Heart right ventricle (tissue), 16 donors: ENCODE measurements at regions of chr11 and their contacts with region 1.

Region 1: GRCh38 chr11:63738720-63739360 is 29.7 kb downstream of the ZFTA start:
- DNase-seq: peak; percentile 41 to 68
- ATAC-seq: peak in 5 of 8 donors; percentile 47 to 83 (median 67)
- H3K4me3 ChIP-seq: no peak overlapping the region
- H3K27ac ChIP-seq: peak overlapping the region in 3 of 10 donors; percentile 1 to 25 (median 7)
- H3K4me1 ChIP-seq: peaks cover 0 to 15% (median 5%) of the 10 kb centered on the region in 9 donors
- H3K27me3 ChIP-seq: no peaks in the 10 kb centered on the region
- CTCF ChIP-seq: peak; percentile 89 to 99 (median 96)

Region 2: GRCh38 chr11:63478896-63479295 is 259.9 kb before region 1 on chr11:
- intact Hi-C with region 1: loop called in 9 of 10 experiments (anchors 2 to 10 kb)
- DNase-seq: peak in 1 of 2 donors; percentile 55
- ATAC-seq: peak; percentile 61 to 84 (median 80)
- H3K4me3 ChIP-seq: no peak overlapping the region
- H3K27ac ChIP-seq: no peak overlapping the region
- H3K4me1 ChIP-seq: peaks cover 0 to 2% (median 0%) of the 10 kb centered on the region in 9 donors
- H3K27me3 ChIP-seq: no peaks in the 10 kb centered on the region
- CTCF ChIP-seq: peak; percentile 77 to 93 (median 91)

Region 3: DNA sequence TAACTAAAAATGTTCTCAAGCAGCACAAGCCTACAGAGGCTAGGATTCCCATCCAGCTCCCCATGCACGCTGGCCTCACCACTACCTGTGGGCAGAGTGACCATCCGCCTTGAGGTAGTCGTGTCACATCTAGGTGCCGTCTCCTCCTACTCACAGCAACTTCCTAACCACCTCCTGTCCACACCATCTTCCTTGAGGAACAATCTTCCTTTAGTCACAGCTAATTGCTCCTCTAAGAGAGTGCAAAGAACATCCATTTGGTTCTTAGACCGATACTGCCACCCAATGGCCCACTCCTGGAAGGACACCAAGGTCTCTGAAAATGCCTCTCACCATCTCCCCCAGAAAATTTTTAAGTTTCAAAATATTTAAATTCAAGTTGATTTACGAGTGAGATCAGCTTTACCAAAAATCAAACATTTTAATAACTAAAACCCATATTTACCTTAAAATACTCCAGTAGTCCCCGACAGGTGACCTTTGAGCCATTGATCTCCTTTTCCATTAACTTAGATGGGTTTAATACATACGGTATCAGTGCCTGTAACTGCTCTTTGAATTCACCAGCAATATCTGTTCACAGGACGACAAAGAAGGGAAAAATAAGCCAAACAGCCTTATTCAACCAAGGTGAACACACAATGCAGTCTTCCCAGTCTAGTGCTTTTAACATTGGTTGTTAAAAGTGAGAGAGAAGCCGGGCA is 102.9 kb before region 1 on chr11:
- intact Hi-C with region 1: loop called in 8 of 10 experiments (anchors 2 to 10 kb)
- DNase-seq: peak; percentile 22 to 49
- ATAC-seq: peak; percentile 62 to 80 (median 74)
- H3K4me3 ChIP-seq: no peak overlapping the region
- H3K27ac ChIP-seq: no peak overlapping the region
- H3K4me1 ChIP-seq: peaks cover 0 to 8% (median 0%) of the 10 kb centered on the region in 9 donors
- H3K27me3 ChIP-seq: no peaks in the 10 kb centered on the region
- CTCF ChIP-seq: peak; percentile 64 to 92 (median 84)

Region 4: GRCh38 chr11:63652671-63653070 is 86.2 kb before region 1 on chr11:
- intact Hi-C with region 1: loop called in 2 of 10 experiments (anchors 10 kb)
- DNase-seq: no peak
- ATAC-seq: no peak
- H3K4me3 ChIP-seq: no peak overlapping the region
- H3K27ac ChIP-seq: no peak overlapping the region
- H3K4me1 ChIP-seq: peaks cover 0 to 5% (median 0%) of the 10 kb centered on the region in 9 donors
- H3K27me3 ChIP-seq: no peaks in the 10 kb centered on the region
- CTCF ChIP-seq: no peak

Region 5: DNA sequence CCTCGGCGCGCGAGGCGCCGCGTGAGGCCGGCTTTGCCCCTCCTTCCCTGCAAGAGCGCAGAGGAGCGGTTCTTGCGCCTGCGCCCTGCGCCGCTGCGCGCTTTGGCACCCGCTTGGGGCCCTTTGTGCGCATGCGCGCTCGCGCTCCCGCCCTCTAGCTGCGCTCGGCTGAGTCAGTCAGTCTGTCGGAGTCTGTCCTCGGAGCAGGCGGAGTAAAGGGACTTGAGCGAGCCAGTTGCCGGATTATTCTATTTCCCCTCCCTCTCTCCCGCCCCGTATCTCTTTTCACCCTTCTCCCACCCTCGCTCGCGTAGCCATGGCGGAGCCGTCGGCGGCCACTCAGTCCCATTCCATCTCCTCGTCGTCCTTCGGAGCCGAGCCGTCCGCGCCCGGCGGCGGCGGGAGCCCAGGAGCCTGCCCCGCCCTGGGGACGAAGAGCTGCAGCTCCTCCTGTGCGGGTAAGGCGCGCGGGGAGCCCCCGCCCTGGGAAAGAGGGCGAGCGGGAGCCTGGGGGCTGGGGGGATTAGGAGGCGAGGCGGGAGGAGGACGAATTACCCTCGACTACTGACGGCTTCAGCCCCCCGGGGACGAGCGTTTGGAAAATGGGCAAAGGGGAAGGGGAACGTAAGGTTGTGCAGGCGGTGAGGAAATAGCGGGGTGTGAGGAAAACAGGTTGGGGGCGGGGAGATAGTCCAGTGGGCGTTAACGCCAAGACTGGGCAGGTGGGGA is 57.4 kb before region 1 on chr11 and contains the start of gene RTN3:
- intact Hi-C with region 1: loop called in 1 of 10 experiments (anchors 5 kb)
- DNase-seq: peak; percentile 95 to 98
- ATAC-seq: peak; percentile 96 to 98 (median 97)
- H3K4me3 ChIP-seq: peak within 1 kb of the TSS; percentile 61 to 96 (median 88)
- H3K27ac ChIP-seq: peak within 1 kb of the TSS; percentile 42 to 97 (median 92)
- H3K4me1 ChIP-seq: peaks cover 0 to 46% (median 19%) of the 10 kb centered on the region in 9 donors
- H3K27me3 ChIP-seq: no peaks in the 10 kb centered on the region
- CTCF ChIP-seq: peak in 5 of 9 donors; percentile 14 to 63 (median 53)
- total RNA-seq, gene RTN3: 38.0 to 72.0 (median 55.4) TPM

Region 6: DNA sequence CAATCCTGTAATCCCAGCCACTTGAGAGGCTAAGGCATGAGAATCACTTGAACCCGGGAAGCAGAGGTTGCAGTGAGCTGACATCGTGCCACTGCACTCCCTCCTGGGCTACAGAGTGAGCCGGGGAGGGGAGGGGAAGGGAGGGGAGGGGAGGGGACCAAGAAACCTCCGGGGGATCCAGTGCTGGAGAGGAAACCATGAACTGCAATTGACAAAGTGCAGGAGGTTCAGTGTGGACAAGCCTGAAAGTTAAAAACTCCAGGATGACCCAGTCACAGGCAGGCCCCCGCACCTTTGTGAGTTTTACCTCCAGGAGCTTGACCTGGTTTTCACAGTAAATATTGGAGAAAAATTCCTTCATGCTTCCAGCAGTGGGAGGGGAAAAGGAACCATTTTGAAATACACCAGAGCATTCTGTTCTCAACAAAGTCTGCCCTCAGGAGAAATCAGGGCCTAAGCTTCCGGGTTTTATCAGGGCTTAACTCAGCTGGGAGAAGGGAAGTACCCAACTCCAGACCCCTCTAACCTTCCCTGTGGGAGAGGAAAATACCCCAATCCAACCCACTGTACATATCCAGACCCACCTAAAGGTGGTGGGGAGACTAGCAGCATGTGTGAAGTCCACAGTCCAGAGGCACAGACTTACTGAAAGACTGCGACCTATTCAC is 45.2 kb after region 1 on chr11:
- intact Hi-C with region 1: no loop called
- DNase-seq: no peak
- ATAC-seq: no peak
- H3K4me3 ChIP-seq: no peak overlapping the region
- H3K27ac ChIP-seq: no peak overlapping the region
- H3K4me1 ChIP-seq: peaks cover 0 to 8% (median 0%) of the 10 kb centered on the region in 9 donors
- H3K27me3 ChIP-seq: no peaks in the 10 kb centered on the region
- CTCF ChIP-seq: no peak